GM12878 (cell line): ENCODE measurements at regions of chr11 and their contacts with region 1.

Region 1: GRCh38 chr11:109946322-109946846 is 146.8 kb upstream of the ZC3H12C start:
- DNase-seq: peak; percentile 92
- ATAC-seq: peak; percentile 93
- H3K4me3 ChIP-seq: peak overlapping the region; percentile 50; the same call in 1 of the 2 replicates
- H3K27ac ChIP-seq: peak overlapping the region; percentile 83
- H3K4me1 ChIP-seq: peaks cover 6% of the 10 kb centered on the region; the same call in 1 of the 2 replicates
- H3K27me3 ChIP-seq: no peaks in the 10 kb centered on the region
- CTCF ChIP-seq: peak; percentile 93 to 98 (median 96)
- EP300 ChIP-seq: no peak
- POLR2A ChIP-seq: no peak
- RAD21 ChIP-seq: peak; percentile 97

Region 2: DNA sequence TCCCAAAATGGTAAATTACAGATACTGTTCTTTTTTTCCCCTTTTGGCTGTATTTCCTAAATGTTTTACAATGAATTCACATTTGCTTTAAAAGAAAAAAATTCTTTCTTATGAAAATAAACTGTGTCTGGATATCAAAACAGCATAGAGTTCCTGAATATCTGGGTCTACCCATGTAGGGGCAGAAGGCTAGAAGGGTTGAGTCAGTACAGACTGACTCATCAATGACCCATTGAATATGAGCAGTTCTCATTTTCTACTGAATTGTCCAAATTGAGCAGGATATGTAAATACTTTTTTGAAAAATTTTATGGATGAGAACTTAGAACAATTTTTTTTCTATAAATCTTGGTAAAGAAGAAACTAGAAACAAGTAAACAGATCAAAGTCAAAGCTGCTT is 540.7 kb before region 1 on chr11:
- CTCF ChIA-PET with region 1: no interaction called
- POLR2A ChIA-PET with region 1: no interaction called
- RAD21 ChIA-PET with region 1: no interaction called
- SMC1A ChIA-PET with region 1: no interaction called
- in situ Hi-C with region 1: no loop called
- intact Hi-C with region 1: no loop called
- DNase-seq: no peak
- ATAC-seq: no peak
- H3K4me3 ChIP-seq: no peak overlapping the region
- H3K27ac ChIP-seq: no peak overlapping the region
- H3K4me1 ChIP-seq: no peaks in the 10 kb centered on the region
- H3K27me3 ChIP-seq: no peaks in the 10 kb centered on the region
- CTCF ChIP-seq: no peak
- EP300 ChIP-seq: no peak
- POLR2A ChIP-seq: no peak
- RAD21 ChIP-seq: no peak

Region 3: GRCh38 chr11:109960831-109961230 is 14.4 kb after region 1 on chr11:
- CTCF ChIA-PET with region 1: interaction called, 4 read pairs
- POLR2A ChIA-PET with region 1: no interaction called
- RAD21 ChIA-PET with region 1: interaction called, 185 read pairs
- SMC1A ChIA-PET with region 1: interaction called, 223 read pairs
- in situ Hi-C with region 1: no loop called
- intact Hi-C with region 1: no loop called
- DNase-seq: no peak
- ATAC-seq: no peak
- H3K4me3 ChIP-seq: no peak overlapping the region
- H3K27ac ChIP-seq: no peak overlapping the region
- H3K4me1 ChIP-seq: peaks cover 15% of the 10 kb centered on the region
- H3K27me3 ChIP-seq: no peaks in the 10 kb centered on the region
- CTCF ChIP-seq: no peak
- EP300 ChIP-seq: no peak
- POLR2A ChIP-seq: no peak
- RAD21 ChIP-seq: no peak

Region 4: GRCh38 chr11:109984634-109985289 is 38.4 kb after region 1 on chr11:
- CTCF ChIA-PET with region 1: interaction called, 4 read pairs
- POLR2A ChIA-PET with region 1: interaction called, 4 read pairs
- RAD21 ChIA-PET with region 1: interaction called, 10 read pairs
- SMC1A ChIA-PET with region 1: interaction called, 8 read pairs
- in situ Hi-C with region 1: no loop called
- intact Hi-C with region 1: no loop called
- DNase-seq: peak; percentile 67
- ATAC-seq: peak; percentile 94
- H3K4me3 ChIP-seq: peak overlapping the region; percentile 30
- H3K27ac ChIP-seq: peak overlapping the region; percentile 89
- H3K4me1 ChIP-seq: peaks cover 19% of the 10 kb centered on the region
- H3K27me3 ChIP-seq: no peaks in the 10 kb centered on the region; a peak in 1 of 4 replicates
- CTCF ChIP-seq: no peak
- EP300 ChIP-seq: peak; percentile 94 to 95
- POLR2A ChIP-seq: no peak
- RAD21 ChIP-seq: no peak

Region 5: GRCh38 chr11:110077831-110078325 is 131.5 kb after region 1 on chr11:
- CTCF ChIA-PET with region 1: interaction called, 8 read pairs
- POLR2A ChIA-PET with region 1: no interaction called
- RAD21 ChIA-PET with region 1: interaction called, 7 read pairs
- SMC1A ChIA-PET with region 1: interaction called, 3 read pairs
- in situ Hi-C with region 1: loop called (anchors 5 kb)
- intact Hi-C with region 1: loop called (anchors 5 kb)
- DNase-seq: peak; percentile 86
- ATAC-seq: peak; percentile 88
- H3K4me3 ChIP-seq: no peak overlapping the region
- H3K27ac ChIP-seq: peak overlapping the region; percentile 51
- H3K4me1 ChIP-seq: peaks cover 16% of the 10 kb centered on the region
- H3K27me3 ChIP-seq: no peaks in the 10 kb centered on the region
- CTCF ChIP-seq: no peak
- EP300 ChIP-seq: peak; percentile 84 to 91
- POLR2A ChIP-seq: no peak
- RAD21 ChIP-seq: no peak; the same call in 1 of the 2 replicates

Region 6: GRCh38 chr11:110098645-110099044 is 152.3 kb after region 1 on chr11:
- CTCF ChIA-PET with region 1: interaction called, 14 read pairs
- POLR2A ChIA-PET with region 1: interaction called, 4 read pairs
- RAD21 ChIA-PET with region 1: interaction called, 37 read pairs
- SMC1A ChIA-PET with region 1: interaction called, 14 read pairs
- in situ Hi-C with region 1: no loop called
- intact Hi-C with region 1: loop called (anchors 1 kb)
- DNase-seq: no peak
- ATAC-seq: peak; percentile 78
- H3K4me3 ChIP-seq: no peak overlapping the region
- H3K27ac ChIP-seq: no peak overlapping the region
- H3K4me1 ChIP-seq: peaks cover 11% of the 10 kb centered on the region; the same call in 1 of the 2 replicates
- H3K27me3 ChIP-seq: no peaks in the 10 kb centered on the region
- CTCF ChIP-seq: peak; percentile 23 to 41 (median 25); a peak in 3 of 6 replicates
- EP300 ChIP-seq: peak in 1 of 2 experiments; percentile 30; a peak in 1 of 4 replicates
- POLR2A ChIP-seq: no peak
- RAD21 ChIP-seq: peak; percentile 57

Region 7: DNA sequence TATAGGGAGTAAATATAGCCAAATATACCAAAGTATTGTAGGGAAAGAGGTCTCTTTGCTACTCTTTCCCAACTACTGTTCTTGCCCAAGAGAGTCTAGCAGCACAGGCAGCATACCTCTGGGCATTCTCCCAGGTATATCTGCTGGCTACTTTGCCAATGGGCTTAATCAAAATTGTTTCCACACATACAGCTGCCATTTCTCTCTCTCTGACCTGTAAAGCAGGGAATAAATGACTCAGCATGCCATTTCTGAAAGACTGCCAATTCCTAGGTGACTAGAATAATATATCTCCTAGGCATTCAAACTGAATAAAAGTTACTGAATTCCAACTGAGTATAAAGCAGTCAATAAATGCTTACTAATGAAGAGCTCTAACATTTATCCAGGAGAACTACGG is 305.5 kb after region 1 on chr11:
- CTCF ChIA-PET with region 1: no interaction called
- POLR2A ChIA-PET with region 1: no interaction called
- RAD21 ChIA-PET with region 1: interaction called, 3 read pairs
- SMC1A ChIA-PET with region 1: no interaction called
- in situ Hi-C with region 1: no loop called
- intact Hi-C with region 1: loop called (anchors 1 kb)
- DNase-seq: no peak
- ATAC-seq: peak; percentile 28; the same call in 1 of the 3 replicates
- H3K4me3 ChIP-seq: no peak overlapping the region
- H3K27ac ChIP-seq: no peak overlapping the region
- H3K4me1 ChIP-seq: no peaks in the 10 kb centered on the region
- H3K27me3 ChIP-seq: no peaks in the 10 kb centered on the region
- CTCF ChIP-seq: no peak
- EP300 ChIP-seq: no peak
- POLR2A ChIP-seq: no peak
- RAD21 ChIP-seq: no peak